Activated CD4-positive, alpha-beta memory T cell treated with anti-CD3 and anti-CD28 coated beads for 36 hours (primary cell): ENCODE measurements at regions of chr7 and their contacts with region 1.

Region 1: DNA sequence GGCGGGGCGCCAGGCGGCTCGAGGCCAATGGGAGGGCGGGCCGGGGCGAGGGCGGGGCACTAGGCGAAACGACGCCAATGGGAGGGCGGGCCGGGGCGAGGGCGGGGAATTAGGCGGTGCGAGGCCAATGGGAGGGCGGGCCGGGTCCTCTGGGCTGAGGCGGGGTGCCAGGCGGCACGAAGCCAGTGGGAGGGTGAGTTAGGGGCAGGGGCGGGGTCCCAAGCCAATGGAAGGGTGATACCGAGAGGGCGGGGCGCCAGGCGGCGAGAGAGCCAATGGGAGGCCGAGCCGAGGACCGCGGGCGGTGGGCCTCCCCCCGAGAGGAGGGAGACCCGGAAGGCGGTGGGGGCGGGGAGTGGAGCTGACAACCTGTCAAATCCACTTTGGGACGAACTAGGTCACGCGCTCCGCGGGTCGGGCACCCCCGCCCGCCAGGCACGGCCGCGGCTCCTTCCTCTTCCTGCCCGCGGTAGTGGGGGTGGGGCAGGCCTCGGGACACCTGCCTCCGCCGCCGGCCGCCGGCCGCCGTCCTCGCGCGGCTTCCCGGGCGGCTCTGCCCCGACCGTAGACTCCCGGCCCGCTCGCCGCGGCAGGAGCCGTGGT is 28.0 kb upstream of the KMT2C start:
- DNase-seq: peak; percentile 100
- H3K4me3 Mint-ChIP-seq: peak overlapping the region; percentile 91
- H3K27ac Mint-ChIP-seq: no peak overlapping the region
- H3K4me1 Mint-ChIP-seq: peaks cover 6% of the 10 kb centered on the region
- H3K27me3 Mint-ChIP-seq: no peaks in the 10 kb centered on the region

Region 2: DNA sequence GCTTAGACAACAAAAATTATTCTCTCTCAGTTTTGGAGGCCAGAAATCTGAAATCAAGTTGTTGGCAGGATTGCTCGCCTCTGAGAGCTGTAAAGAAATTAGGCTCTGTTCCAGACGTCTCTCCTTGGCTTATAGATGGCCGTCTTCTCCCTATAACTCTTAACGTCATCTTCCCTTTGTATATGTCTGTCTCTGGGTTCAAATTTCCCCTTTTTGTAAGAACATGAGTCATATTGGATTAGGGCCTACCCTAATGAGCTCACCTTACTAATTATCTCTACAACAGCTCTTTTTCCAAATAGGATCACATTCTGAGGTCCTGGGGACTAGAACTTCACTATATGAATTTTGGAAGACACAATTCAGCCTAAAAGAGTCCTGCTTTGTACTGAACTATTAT is 485.2 kb before region 1 on chr7:
- CTCF ChIA-PET with region 1: no interaction called
- POLR2A ChIA-PET with region 1: no interaction called
- intact Hi-C with region 1: no loop called
- DNase-seq: no peak
- H3K4me3 Mint-ChIP-seq: no peak overlapping the region
- H3K27ac Mint-ChIP-seq: no peak overlapping the region
- H3K4me1 Mint-ChIP-seq: no peaks in the 10 kb centered on the region
- H3K27me3 Mint-ChIP-seq: peaks cover 1% of the 10 kb centered on the region

Region 3: DNA sequence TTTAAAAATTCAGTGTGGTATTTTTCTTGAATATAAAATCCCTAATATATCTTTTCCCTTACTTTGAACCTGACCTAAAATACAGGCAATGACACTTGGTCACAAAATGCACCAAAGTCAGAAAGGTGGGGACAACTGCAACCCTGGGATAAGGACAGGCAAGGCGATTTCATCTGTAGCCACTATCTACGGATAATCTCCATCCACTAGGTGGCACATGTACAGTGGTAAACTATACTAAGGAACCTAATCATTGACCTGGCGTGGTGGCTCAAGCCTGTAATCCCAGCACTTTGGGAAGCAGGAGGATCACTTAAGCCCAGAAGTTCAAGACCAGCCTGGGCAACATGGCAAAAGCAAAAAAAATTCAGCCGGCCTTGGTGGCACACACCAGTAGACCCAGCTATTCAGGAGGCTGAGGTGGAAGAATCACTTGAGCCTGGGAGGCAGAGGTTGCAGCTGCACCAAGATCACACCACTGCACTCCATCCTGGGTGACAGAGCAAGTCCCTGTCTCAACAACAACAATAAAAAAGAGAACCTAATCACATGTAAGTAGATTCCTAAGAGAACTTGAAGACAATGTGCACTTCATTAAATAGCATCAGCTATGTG is 126.9 kb before region 1 on chr7:
- CTCF ChIA-PET with region 1: interaction called, 11 read pairs
- POLR2A ChIA-PET with region 1: interaction called, 5 read pairs
- intact Hi-C with region 1: loop called (anchors 1 kb)
- DNase-seq: no peak
- H3K4me3 Mint-ChIP-seq: no peak overlapping the region
- H3K27ac Mint-ChIP-seq: peak overlapping the region; percentile 74
- H3K4me1 Mint-ChIP-seq: peaks cover 38% of the 10 kb centered on the region
- H3K27me3 Mint-ChIP-seq: no peaks in the 10 kb centered on the region

Region 4: GRCh38 chr7:152424348-152425108 is 39.3 kb before region 1 on chr7:
- CTCF ChIA-PET with region 1: no interaction called
- POLR2A ChIA-PET with region 1: interaction called, 4 read pairs
- intact Hi-C with region 1: loop called (anchors 5 kb)
- DNase-seq: peak; percentile 37
- H3K4me3 Mint-ChIP-seq: no peak overlapping the region
- H3K27ac Mint-ChIP-seq: peak overlapping the region; percentile 76
- H3K4me1 Mint-ChIP-seq: peaks cover 67% of the 10 kb centered on the region
- H3K27me3 Mint-ChIP-seq: no peaks in the 10 kb centered on the region

Region 5: GRCh38 chr7:152436111-152436930 is 27.5 kb before region 1 on chr7:
- CTCF ChIA-PET with region 1: interaction called, 7 read pairs
- POLR2A ChIA-PET with region 1: interaction called, 10 read pairs
- intact Hi-C with region 1: loop called (anchors 1 kb)
- DNase-seq: peak; percentile 92
- H3K4me3 Mint-ChIP-seq: peak overlapping the region; percentile 78
- H3K27ac Mint-ChIP-seq: peak overlapping the region; percentile 81
- H3K4me1 Mint-ChIP-seq: peaks cover 19% of the 10 kb centered on the region
- H3K27me3 Mint-ChIP-seq: no peaks in the 10 kb centered on the region

Region 6: GRCh38 chr7:152675759-152676636 is 212.2 kb after region 1 on chr7 and contains the start of gene XRCC2:
- CTCF ChIA-PET with region 1: no interaction called
- POLR2A ChIA-PET with region 1: interaction called, 4 read pairs
- intact Hi-C with region 1: loop called (anchors 1 kb)
- DNase-seq: peak; percentile 95
- H3K4me3 Mint-ChIP-seq: peak within 1 kb of the TSS; percentile 90
- H3K27ac Mint-ChIP-seq: peak within 1 kb of the TSS; percentile 84
- H3K4me1 Mint-ChIP-seq: peaks cover 11% of the 10 kb centered on the region
- H3K27me3 Mint-ChIP-seq: no peaks in the 10 kb centered on the region
- total RNA-seq, gene XRCC2: 13.6 to 15.0 TPM

Region 7: DNA sequence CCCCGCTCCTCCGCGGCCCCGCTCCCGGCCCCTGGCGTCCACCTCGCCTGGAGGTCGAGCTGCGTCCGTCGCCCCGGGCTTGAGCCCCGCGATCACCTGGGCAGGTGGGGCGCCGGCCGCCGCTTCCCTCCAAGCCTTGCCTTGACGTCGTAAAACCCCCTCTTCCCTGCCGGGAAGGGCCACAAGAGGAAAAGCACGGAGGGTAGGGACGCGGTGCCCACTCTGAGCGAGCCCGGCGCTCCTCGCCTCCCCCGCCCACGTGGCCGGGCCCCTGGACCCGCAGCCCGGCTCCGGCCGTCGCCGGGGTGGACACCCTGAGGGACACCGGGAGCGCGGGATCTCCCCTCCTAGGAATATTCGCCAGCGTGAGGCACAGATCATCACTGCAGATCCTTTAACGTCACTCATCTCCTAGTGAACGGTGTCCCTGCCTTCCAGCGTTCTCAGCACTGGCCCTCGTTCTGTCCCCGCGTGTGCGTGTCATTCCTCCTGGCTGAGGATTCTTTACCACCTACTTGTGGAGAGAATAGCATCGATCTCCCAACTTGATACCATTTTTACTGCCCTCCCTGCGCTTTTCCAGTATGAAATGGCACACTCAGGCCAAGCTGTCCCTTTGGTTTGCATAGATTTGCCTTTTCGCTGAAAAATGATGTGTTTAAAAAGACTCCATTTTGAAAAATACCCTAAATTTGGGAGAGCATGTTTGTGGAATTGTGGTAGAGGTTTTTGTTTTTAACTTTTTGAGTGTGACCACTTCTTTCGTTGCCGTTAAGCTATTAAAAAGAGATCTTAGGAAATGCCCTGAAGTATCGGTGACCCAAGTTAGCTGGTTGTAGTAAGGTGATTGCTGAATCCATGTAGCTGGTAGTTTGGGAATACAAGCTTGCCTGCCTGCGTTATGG is 296.4 kb after region 1 on chr7:
- CTCF ChIA-PET with region 1: no interaction called
- POLR2A ChIA-PET with region 1: no interaction called
- intact Hi-C with region 1: loop called (anchors 1 kb)
- DNase-seq: peak; percentile 32
- H3K4me3 Mint-ChIP-seq: peak overlapping the region; percentile 91
- H3K27ac Mint-ChIP-seq: peak overlapping the region; percentile 80
- H3K4me1 Mint-ChIP-seq: peaks cover 17% of the 10 kb centered on the region
- H3K27me3 Mint-ChIP-seq: no peaks in the 10 kb centered on the region